ENCODE measurements at regions of chr17 and their contacts with region 1.

Region 1: DNA sequence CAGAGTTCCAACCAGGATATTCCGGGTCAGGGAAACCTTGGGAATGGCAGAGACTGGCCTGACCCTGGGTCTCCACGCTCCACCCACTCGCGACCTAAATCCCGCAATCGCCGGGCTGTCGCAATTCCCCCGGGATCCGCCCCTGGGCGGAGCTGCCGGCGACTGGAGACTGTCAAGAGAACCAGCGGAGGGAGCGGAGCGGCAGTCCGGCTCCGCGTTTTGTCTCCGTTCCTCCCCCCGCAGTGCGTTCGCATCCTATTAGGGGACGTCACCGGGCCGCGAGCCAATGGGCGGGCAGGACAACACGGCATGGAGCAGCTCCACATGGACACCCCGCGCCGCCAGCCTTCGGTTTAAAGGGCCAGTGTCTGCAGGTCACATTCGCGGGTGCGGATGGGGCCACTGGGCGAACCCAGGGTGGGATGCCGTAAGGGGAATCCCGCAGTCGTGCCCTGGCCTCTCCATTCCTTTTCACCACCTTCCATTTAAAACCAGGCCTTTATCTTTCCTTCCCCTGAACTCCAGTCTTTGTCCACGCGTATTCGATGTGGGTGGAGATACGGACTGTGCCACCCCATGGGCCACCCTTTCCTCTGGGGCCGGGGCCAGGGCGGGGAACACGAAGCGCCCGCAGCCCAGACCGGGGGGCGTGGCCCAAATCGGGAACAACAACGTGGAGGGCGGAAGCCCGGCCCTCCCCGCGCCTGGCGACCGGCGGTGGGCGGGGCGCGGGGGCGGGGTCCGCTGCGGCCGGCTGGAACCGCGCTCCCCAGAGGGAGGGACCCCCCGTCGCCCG is 764 bp upstream of the MNT start:
- DNase-seq: peak; percentile 100
- ATAC-seq: peak; percentile 59
- H3K4me3 Mint-ChIP-seq: peak overlapping the region; percentile 88
- H3K27ac Mint-ChIP-seq: peak overlapping the region; percentile 99
- H3K4me1 Mint-ChIP-seq: peaks cover 43% of the 10 kb centered on the region
- H3K27me3 Mint-ChIP-seq: no peaks in the 10 kb centered on the region

Region 2: DNA sequence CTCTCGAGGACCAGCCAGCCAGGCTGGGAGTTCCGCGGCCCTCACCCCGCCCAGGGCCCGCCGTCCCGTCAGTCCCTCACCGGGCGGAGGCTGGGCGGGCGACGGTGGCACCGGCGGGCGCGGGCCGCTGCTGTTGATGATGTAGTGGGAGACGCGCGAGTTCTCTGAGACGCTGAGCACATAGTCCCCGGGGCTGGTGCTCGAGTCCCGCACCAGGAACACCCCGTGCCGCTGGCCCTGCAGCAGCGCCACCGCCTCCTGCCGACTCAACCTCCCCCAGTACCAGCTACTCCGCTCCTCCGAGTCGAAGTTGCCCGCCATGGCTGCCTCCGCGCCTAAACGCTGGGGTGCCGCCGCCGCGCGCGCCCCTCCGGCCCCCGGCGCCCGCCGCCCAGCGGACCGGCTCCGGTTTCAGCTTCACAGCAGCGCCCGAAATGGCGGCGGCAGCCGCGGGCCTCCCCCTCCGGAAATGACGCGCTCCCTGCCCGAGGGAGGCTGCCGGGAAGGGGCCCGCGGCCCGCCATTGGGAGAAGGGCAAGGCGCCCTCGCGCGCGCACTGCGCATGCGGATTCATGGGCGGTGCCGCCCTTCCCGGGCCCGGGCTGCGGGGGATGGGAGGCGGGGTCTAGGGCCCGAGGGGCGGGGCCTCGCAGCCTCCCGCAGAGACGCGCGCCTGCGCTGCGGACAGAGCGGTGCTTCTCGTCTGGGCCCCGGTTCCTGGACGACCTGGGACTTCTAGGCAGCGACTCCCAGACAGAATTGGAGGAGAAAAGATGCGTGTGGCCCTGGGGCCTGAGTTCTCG is 945.6 kb before region 1 on chr17 and contains the start of gene CRK:
- CTCF ChIA-PET with region 1: no interaction called
- POLR2A ChIA-PET with region 1: no interaction called
- intact Hi-C with region 1: loop called in 1 of 2 experiments (anchors 1 kb)
- DNase-seq: peak; percentile 99
- ATAC-seq: peak; percentile 93
- H3K4me3 Mint-ChIP-seq: peak within 1 kb of the TSS; percentile 82
- H3K27ac Mint-ChIP-seq: peak within 1 kb of the TSS; percentile 89
- H3K4me1 Mint-ChIP-seq: peaks cover 46% of the 10 kb centered on the region
- H3K27me3 Mint-ChIP-seq: peaks cover 9% of the 10 kb centered on the region
- total RNA-seq, gene CRK: 10.1 to 11.6 TPM

Region 3: GRCh38 chr17:2259769-2260536 is 141.7 kb before region 1 on chr17:
- CTCF ChIA-PET with region 1: no interaction called
- POLR2A ChIA-PET with region 1: no interaction called
- intact Hi-C with region 1: no loop called
- DNase-seq: peak; percentile 90
- ATAC-seq: peak; percentile 74
- H3K4me3 Mint-ChIP-seq: peak overlapping the region; percentile 64
- H3K27ac Mint-ChIP-seq: peak overlapping the region; percentile 90
- H3K4me1 Mint-ChIP-seq: peaks cover 73% of the 10 kb centered on the region
- H3K27me3 Mint-ChIP-seq: no peaks in the 10 kb centered on the region

Region 4: GRCh38 chr17:2336215-2336851 is 65.3 kb before region 1 on chr17 and contains the start of gene TSR1:
- CTCF ChIA-PET with region 1: no interaction called
- POLR2A ChIA-PET with region 1: interaction called, 3 read pairs
- intact Hi-C with region 1: loop called (anchors 1 to 2 kb)
- DNase-seq: peak; percentile 94
- ATAC-seq: peak; percentile 93
- H3K4me3 Mint-ChIP-seq: no peak within 1 kb of the TSS
- H3K27ac Mint-ChIP-seq: peak within 1 kb of the TSS; percentile 99
- H3K4me1 Mint-ChIP-seq: peaks cover 14% of the 10 kb centered on the region
- H3K27me3 Mint-ChIP-seq: no peaks in the 10 kb centered on the region
- total RNA-seq, gene TSR1: 59.3 to 77.0 TPM

Region 5: GRCh38 chr17:2416010-2416734 is 14.5 kb after region 1 on chr17:
- CTCF ChIA-PET with region 1: interaction called, 27 read pairs
- POLR2A ChIA-PET with region 1: interaction called, 5 read pairs
- intact Hi-C with region 1: no loop called
- DNase-seq: peak; percentile 90
- ATAC-seq: peak; percentile 82
- H3K4me3 Mint-ChIP-seq: no peak overlapping the region
- H3K27ac Mint-ChIP-seq: no peak overlapping the region
- H3K4me1 Mint-ChIP-seq: peaks cover 4% of the 10 kb centered on the region
- H3K27me3 Mint-ChIP-seq: no peaks in the 10 kb centered on the region

Region 6: GRCh38 chr17:2592971-2593820 is 191.6 kb after region 1 on chr17 and contains the start of gene PAFAH1B1:
- CTCF ChIA-PET with region 1: no interaction called
- POLR2A ChIA-PET with region 1: no interaction called
- intact Hi-C with region 1: loop called in 1 of 2 experiments (anchors 1 kb)
- DNase-seq: peak; percentile 98
- ATAC-seq: peak; percentile 84
- H3K4me3 Mint-ChIP-seq: peak within 1 kb of the TSS; percentile 79
- H3K27ac Mint-ChIP-seq: peak within 1 kb of the TSS; percentile 88
- H3K4me1 Mint-ChIP-seq: peaks cover 25% of the 10 kb centered on the region
- H3K27me3 Mint-ChIP-seq: no peaks in the 10 kb centered on the region
- total RNA-seq, gene PAFAH1B1: 163 to 167 TPM

Region 7: DNA sequence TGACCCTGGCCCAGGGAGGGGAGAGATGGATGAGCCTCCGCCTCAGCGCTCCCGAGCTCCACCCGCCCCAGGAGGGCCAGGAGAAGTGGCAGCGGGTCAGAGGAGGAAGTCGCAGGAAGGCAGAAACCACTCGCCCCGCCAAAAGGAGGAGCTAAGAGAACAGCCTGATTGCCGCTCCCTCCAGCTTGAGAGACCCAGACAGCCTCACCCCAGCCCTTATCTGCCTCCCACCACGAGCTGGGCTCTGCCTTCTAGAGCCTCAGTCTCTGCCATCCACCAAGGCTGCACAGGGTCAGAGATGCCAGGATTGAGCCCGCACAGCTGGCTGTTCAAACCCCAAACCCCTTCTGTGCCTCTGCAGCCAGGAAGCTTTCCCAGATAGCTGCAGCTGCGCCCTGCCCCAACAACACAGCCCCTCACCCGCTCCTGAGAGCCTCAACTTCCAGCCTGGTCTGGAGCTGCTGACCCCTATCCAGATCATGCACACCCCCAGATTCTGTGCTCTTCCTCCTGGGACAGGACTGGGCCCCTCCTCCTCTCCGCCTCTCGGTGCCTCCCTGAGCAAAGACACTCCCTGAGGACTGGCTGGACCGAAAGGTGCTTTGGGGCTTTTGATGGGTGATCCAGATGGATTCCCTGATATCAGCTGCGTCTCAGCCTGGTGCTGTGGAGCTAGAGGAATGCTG is 1563.6 kb after region 1 on chr17:
- CTCF ChIA-PET with region 1: no interaction called
- POLR2A ChIA-PET with region 1: no interaction called
- intact Hi-C with region 1: loop called in 1 of 2 experiments (anchors 10 kb)
- DNase-seq: peak; percentile 86
- ATAC-seq: peak; percentile 75
- H3K4me3 Mint-ChIP-seq: peak overlapping the region; percentile 81
- H3K27ac Mint-ChIP-seq: peak overlapping the region; percentile 93
- H3K4me1 Mint-ChIP-seq: peaks cover 40% of the 10 kb centered on the region
- H3K27me3 Mint-ChIP-seq: no peaks in the 10 kb centered on the region